GM18951 (cell line): ENCODE measurements at regions of chr5 and their contacts with region 1.

Region 1: GRCh38 chr5:144203750-144204596 is 33.3 kb downstream of the KCTD16 start:
- POLR2A ChIP-seq: no peak

Region 2: GRCh38 chr5:145237843-145238242 is 1033.9 kb after region 1 on chr5:
- in situ Hi-C with region 1: loop called (anchors 25 kb)
- POLR2A ChIP-seq: no peak

Region 3: DNA sequence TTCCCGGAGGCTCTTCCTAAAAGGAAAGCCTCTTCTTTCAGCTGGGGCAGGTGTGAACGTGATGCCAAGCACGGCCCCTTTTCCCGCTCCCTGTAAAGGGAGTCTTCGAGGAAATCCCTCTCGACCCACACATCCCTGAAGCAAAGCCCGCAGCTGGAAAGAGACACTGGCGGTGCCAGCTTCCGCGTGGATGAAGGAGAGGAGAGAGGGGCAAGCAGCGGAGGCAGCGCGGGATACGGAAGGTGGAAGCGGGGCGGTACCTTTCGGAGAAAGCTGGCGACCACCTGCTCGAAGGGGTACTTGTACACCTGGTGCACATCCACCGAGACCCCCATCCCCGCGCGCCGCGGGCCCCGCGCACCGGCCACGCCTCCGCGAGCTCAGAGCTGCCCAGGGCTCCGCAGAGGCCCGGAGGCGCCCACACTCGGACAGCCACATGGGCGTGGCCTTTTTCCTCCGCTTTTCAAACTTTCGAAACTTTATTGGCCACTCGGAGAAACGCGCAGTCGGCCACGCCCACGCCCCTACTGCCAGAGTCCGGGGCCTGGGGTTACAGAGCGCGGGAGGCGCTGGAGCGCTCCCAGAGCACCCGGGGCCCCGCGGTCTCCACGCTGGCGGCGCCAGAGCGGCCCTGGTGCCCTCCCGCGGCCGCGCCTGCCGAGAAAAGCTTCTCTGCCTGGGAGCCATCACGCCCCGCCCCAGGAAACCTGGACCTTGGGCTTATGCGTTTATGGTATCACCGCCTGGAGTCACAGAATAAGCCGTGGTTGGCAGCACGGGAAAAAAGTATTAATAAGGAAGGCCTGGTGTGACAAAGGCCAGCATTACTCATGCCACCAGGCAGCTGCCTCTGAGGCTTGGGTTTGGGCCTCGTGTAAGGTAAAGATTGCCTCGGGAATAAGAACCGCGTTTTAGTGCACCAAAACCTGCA is 1631.2 kb after region 1 on chr5 and contains the start of gene PRELID2:
- in situ Hi-C with region 1: loop called (anchors 25 kb)
- POLR2A ChIP-seq: peak; percentile 34